ENCODE measurements at regions of chr14 and their contacts with region 1.

Region 1: GRCh38 chr14:92456215-92457015 is 57.2 kb upstream of the RIN3 start:
- DNase-seq: peak; percentile 73
- ATAC-seq: peak; percentile 85
- H3K4me3 ChIP-seq: no peak overlapping the region
- H3K27ac ChIP-seq: no peak overlapping the region
- H3K4me1 ChIP-seq: no peaks in the 10 kb centered on the region
- H3K27me3 ChIP-seq: no peaks in the 10 kb centered on the region
- CTCF ChIP-seq: peak; percentile 82

Region 2: GRCh38 chr14:92135267-92135666 is 321.1 kb before region 1 on chr14:
- CTCF ChIA-PET with region 1: no interaction called
- POLR2A ChIA-PET with region 1: no interaction called
- intact Hi-C with region 1: loop called (anchors 5 kb)
- DNase-seq: peak; percentile 43
- ATAC-seq: no peak; the same call in 1 of the 2 replicates
- H3K4me3 ChIP-seq: no peak overlapping the region
- H3K27ac ChIP-seq: no peak overlapping the region
- H3K4me1 ChIP-seq: no peaks in the 10 kb centered on the region
- H3K27me3 ChIP-seq: no peaks in the 10 kb centered on the region
- CTCF ChIP-seq: peak; percentile 77

Region 3: GRCh38 chr14:92154283-92154942 is 302.0 kb before region 1 on chr14:
- CTCF ChIA-PET with region 1: no interaction called
- POLR2A ChIA-PET with region 1: no interaction called
- intact Hi-C with region 1: loop called (anchors 5 kb)
- DNase-seq: peak; percentile 86
- ATAC-seq: peak; percentile 99
- H3K4me3 ChIP-seq: no peak overlapping the region
- H3K27ac ChIP-seq: peak overlapping the region; percentile 75
- H3K4me1 ChIP-seq: peaks cover 26% of the 10 kb centered on the region
- H3K27me3 ChIP-seq: no peaks in the 10 kb centered on the region
- CTCF ChIP-seq: no peak

Region 4: GRCh38 chr14:92768795-92769194 is 312.4 kb after region 1 on chr14:
- CTCF ChIA-PET with region 1: interaction called, 12 read pairs
- POLR2A ChIA-PET with region 1: no interaction called
- intact Hi-C with region 1: no loop called
- DNase-seq: no peak
- ATAC-seq: no peak
- H3K4me3 ChIP-seq: no peak overlapping the region
- H3K27ac ChIP-seq: no peak overlapping the region
- H3K4me1 ChIP-seq: no peaks in the 10 kb centered on the region
- H3K27me3 ChIP-seq: no peaks in the 10 kb centered on the region
- CTCF ChIP-seq: no peak